ENCODE measurements at regions of chr1 and their contacts with region 1.

Region 1: GRCh38 chr1:114346480-114347029 is 164.4 kb downstream of the TRIM33 start:
- DNase-seq: peak; percentile 94 to 97 (median 96)
- H3K4me3 ChIP-seq: peak overlapping the region; percentile 57
- H3K4me3 Mint-ChIP-seq: peak overlapping the region; percentile 75 to 94 (median 89)
- H3K27ac ChIP-seq: no peak overlapping the region
- H3K27ac Mint-ChIP-seq: peak overlapping the region; percentile 41 to 96 (median 96)
- H3K4me1 ChIP-seq: peaks cover 40% of the 10 kb centered on the region
- H3K4me1 Mint-ChIP-seq: peaks cover 35 to 47% (median 43%) of the 10 kb centered on the region in 3 donors
- H3K27me3 ChIP-seq: no peaks in the 10 kb centered on the region
- H3K27me3 Mint-ChIP-seq: peaks cover 0 to 1% of the 10 kb centered on the region in 2 donors

Region 2: DNA sequence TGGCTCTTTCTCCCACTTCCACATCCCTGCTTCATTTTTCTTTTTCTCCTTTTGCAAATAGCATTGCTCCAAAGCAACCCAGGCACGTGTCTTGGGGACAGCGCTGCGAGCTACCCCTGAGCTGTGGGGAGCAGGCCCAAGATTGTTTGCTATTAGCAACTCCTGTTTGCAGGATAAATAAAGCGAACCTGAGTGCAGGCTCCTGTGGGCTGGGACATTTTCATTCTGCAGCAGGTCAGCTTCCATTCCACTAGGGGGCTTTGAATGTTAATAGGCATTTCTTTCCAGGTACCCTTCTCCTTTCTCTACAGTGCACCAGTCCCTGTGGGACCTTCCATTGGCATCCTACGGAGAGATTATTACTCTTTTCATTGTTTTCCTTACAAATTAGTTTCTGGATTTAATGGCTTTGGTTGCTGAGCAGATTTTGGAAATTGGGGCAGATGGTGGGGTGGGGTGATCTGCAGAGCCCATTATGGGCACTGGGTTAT is 313.3 kb before region 1 on chr1:
- CTCF ChIA-PET with region 1: no interaction called
- POLR2A ChIA-PET with region 1: no interaction called
- DNase-seq: peak in 1 of 5 donors; percentile 2
- H3K4me3 ChIP-seq: no peak overlapping the region
- H3K4me3 Mint-ChIP-seq: no peak overlapping the region
- H3K27ac ChIP-seq: no peak overlapping the region
- H3K27ac Mint-ChIP-seq: no peak overlapping the region
- H3K4me1 ChIP-seq: no peaks in the 10 kb centered on the region
- H3K4me1 Mint-ChIP-seq: no peaks in the 10 kb centered on the region
- H3K27me3 ChIP-seq: no peaks in the 10 kb centered on the region
- H3K27me3 Mint-ChIP-seq: no peaks in the 10 kb centered on the region

Region 3: DNA sequence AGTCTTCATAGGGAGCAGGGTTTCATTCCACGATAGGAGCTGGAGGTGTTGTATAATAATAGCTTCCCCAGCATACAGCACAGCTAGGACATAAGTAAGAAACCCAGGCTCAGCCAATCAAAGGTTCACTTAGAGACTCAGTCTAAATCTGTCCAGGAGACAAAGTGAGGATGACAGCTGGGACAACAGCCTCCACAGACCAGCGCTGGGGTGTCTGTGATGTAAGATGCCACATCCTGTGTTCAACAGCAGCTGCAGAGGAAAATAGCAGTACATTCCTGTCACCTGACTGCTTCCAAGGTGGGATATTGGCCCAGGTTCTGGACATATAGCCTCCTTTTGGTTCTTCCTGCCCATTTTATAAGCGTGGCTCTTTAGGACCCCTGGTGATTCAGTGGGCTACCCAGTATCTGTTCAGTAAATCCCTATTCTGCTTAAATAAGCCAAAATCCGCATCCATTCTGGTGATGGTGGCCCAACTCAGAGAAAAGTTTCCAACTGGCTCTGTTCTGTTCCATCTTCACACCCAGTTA is 16.0 kb before region 1 on chr1:
- CTCF ChIA-PET with region 1: interaction called, 30 read pairs
- POLR2A ChIA-PET with region 1: interaction called, 4 read pairs
- DNase-seq: peak in 3 of 5 donors; percentile 15 to 30 (median 23)
- H3K4me3 ChIP-seq: no peak overlapping the region
- H3K4me3 Mint-ChIP-seq: peak overlapping the region in 6 of 7 donors; percentile 40 to 70 (median 47)
- H3K27ac ChIP-seq: no peak overlapping the region
- H3K27ac Mint-ChIP-seq: peak overlapping the region in 7 of 8 donors; percentile 43 to 93 (median 86)
- H3K4me1 ChIP-seq: peaks cover 60% of the 10 kb centered on the region
- H3K4me1 Mint-ChIP-seq: peaks cover 73 to 76% (median 75%) of the 10 kb centered on the region in 3 donors
- H3K27me3 ChIP-seq: no peaks in the 10 kb centered on the region
- H3K27me3 Mint-ChIP-seq: no peaks in the 10 kb centered on the region

Measured in CD8-positive, alpha-beta memory T cell (primary cell).